PC-3 (cell line): ENCODE measurements at regions of chr9 and their contacts with region 1.

Region 1: GRCh38 chr9:136122425-136123383 is 4.0 kb upstream of the TMEM250 start:
- DNase-seq: peak; percentile 61
- ATAC-seq: peak; percentile 40
- H3K4me3 ChIP-seq: no peak overlapping the region
- H3K27ac ChIP-seq: no peak overlapping the region
- H3K4me1 ChIP-seq: peaks cover under 1% of the 10 kb centered on the region; the same call in 1 of the 2 replicates
- H3K27me3 ChIP-seq: no peaks in the 10 kb centered on the region
- CTCF ChIP-seq: peak; percentile 88

Region 2: DNA sequence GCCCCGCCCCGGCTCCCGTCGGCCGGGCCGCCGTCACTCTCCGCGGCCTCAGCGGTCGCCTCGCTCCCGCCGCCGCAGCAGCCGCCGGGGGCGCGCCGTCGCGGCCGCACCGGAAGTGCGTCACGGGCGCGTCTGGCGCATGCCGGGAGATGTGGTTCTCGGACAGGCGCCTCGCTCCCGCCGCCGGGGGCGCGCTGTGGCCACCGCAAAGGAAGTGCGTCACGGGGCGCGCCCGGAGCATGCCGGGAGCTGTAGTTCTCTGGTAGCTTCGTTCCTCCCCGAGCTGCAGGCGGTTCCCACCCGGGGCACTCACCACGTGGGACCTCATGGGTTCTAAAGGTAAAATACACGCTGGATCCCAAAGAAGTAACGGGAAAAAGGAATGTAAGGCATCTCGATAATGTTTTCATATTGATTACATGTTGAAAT is 161.4 kb before region 1 on chr9 and contains the start of gene UBAC1:
- CTCF ChIA-PET with region 1: interaction called, 4 read pairs
- POLR2A ChIA-PET with region 1: no interaction called
- intact Hi-C with region 1: loop called (anchors 2 kb)
- DNase-seq: peak; percentile 92
- ATAC-seq: peak; percentile 83
- H3K4me3 ChIP-seq: peak within 1 kb of the TSS; percentile 96
- H3K27ac ChIP-seq: 0 out of 2 replicates have a peak within 1 kb of the TSS, but pooled peaks have one; percentile 16
- H3K4me1 ChIP-seq: peaks cover 10% of the 10 kb centered on the region
- H3K27me3 ChIP-seq: no peaks in the 10 kb centered on the region
- CTCF ChIP-seq: no peak
- total RNA-seq, gene UBAC1: 65.9 and 77.3 TPM in 2 replicates

Region 3: GRCh38 chr9:136089697-136090045 is 33.0 kb before region 1 on chr9:
- CTCF ChIA-PET with region 1: interaction called, 4 read pairs
- POLR2A ChIA-PET with region 1: no interaction called
- intact Hi-C with region 1: loop called (anchors 2 kb)
- DNase-seq: peak; percentile 35
- ATAC-seq: no peak
- H3K4me3 ChIP-seq: no peak overlapping the region
- H3K27ac ChIP-seq: no peak overlapping the region
- H3K4me1 ChIP-seq: peaks cover 9% of the 10 kb centered on the region; the same call in 1 of the 2 replicates
- H3K27me3 ChIP-seq: no peaks in the 10 kb centered on the region
- CTCF ChIP-seq: peak; percentile 57

Region 4: DNA sequence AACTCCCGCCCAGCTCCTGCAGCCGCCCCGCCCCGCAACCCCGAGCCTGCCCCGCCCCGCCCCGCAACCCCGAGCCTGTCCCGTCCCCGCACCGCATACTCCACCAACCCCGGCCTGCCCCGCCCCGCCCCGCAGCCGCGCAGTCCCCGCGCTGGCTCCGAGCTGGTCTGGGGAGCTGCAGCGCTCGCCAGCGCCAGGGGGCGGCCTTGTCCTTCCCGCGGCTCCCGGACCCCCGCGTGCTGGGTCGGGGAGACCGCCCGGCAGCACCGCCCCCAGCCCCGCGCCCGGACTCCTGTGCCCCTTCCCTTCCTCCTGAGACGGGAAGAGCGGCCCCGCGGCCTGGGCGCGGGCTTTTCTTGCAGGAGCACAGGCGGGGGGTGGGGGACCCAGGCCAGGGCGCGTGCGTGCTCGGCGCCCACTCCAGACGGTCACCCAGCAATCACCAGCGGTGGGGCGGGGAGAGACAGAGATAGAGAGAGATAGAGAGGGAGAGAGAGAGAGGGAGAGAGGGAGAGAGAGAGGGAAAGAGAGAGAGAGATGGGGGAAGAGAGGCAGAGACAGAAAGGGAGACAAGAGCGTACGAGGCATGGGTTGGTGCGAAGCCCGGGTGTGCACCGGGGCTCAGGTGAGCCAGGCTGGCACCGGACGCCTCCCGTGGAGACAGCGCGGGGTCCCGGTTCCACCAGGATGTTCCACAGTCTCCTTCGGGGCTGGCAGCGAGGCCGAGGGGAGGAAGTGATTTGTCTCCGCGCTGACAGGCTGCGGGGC is 10.7 kb after region 1 on chr9:
- CTCF ChIA-PET with region 1: no interaction called
- POLR2A ChIA-PET with region 1: no interaction called
- intact Hi-C with region 1: no loop called
- DNase-seq: no peak
- ATAC-seq: peak; percentile 42; the same call in 1 of the 2 replicates
- H3K4me3 ChIP-seq: peak overlapping the region; percentile 27; the same call in 1 of the 2 replicates
- H3K27ac ChIP-seq: no peak overlapping the region
- H3K4me1 ChIP-seq: no peaks in the 10 kb centered on the region
- H3K27me3 ChIP-seq: no peaks in the 10 kb centered on the region; the same call in 1 of the 2 replicates
- CTCF ChIP-seq: peak; percentile 44